ENCODE measurements at regions of chr1 and their contacts with region 1.

Region 1: GRCh38 chr1:9196129-9197040 is 38.2 kb upstream of the H6PD start:
- DNase-seq: peak; percentile 91
- ATAC-seq: peak; percentile 87

Region 2: GRCh38 chr1:9112961-9113880 is 83.2 kb before region 1 on chr1:
- intact Hi-C with region 1: loop called (anchors 2 kb)
- DNase-seq: no peak
- ATAC-seq: no peak

Region 3: DNA sequence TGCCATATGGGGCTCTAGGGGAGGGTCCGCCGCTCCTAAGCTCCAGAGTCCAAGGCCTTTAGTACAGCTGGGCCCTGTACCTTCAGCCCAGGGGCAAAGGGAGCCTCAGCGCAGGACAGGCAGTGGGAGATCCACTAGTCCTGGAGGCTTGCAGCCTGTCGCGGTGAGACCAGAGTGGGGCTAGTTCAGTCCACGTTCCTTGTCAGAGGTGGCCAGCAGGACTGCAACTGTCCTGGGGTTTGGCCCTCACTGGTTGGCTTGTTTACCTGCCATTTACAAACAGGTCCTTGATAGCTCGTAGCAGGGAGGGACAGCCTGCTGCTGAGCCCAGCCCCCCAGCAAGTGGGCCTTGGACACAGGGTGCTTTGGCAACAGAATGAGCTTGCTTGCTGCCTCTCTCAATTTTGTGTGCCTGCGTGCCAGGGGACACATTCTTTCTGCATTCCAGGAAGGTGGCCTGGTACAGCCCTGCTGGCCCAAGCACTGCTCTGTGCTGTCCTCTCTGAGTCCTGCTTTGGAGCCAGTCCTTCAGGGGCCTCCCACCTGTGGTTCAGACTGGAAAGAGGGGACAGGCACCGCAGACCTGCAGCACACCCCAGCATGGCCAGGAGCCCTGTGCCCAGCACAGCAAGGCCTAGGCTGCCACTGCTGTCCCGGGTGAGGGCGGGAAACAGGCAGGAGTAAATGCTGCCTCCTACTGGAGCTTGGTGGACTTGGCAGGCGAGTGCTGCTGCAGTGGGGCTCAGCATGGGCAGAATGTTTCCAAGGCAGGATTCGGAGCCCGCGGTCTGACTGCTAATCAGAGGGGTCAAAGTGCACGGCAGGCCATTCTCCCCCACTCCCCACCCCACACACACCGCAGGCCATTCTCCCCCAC is 53.4 kb after region 1 on chr1:
- intact Hi-C with region 1: no loop called
- DNase-seq: no peak
- ATAC-seq: peak; percentile 65

Measured in sciatic nerve (tissue), 2 donors.